Naive thymus-derived CD4-positive, alpha-beta T cell (primary cell): ENCODE measurements at regions of chr17 and their contacts with region 1.

Region 1: DNA sequence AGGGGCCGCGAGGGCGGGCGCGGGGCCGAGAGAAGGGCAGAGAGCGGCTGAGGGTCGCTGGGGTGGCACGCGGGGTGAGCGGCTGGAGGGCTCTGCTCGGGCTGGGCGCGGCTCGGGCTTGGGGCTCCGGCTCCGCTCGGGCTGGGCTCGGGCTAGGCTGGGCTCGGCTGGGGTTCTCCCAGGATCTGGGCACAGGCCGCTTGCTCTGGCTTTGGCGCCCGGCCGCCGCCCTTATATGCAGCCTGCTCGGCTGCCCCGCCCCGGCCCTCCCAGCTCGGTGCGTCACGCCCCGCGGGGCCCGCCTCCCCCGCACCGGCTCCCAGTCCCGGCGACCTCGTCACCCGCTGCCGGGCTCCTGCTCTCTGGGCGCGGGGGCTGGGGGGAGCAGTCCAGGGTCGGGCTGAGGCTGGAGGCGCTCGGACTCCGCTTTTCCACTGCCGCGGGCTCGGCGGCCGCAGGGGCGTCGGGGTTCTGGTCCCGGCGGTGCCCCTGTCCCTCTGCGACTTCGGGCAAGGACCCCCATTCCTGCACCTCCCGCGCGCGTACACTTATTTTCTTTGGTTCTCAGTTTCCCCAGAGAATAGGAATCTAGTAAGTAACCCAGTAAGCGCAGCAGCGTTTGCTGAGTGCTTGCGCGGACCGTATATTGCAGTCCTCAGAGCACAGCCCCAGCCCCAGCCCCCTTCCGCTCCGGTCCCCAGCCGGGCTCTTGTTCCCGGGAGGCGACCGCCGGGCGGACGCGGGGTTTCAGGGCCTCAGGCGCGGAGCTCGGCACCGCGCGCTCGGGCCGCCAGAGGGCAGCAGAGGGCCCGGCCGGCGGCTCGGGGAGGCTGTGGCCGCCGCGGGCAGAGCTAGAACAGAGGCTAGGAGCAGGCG is at the start of gene RASD1:
- DNase-seq: peak; percentile 61 to 89 (median 74)
- ATAC-seq: peak; percentile 90
- H3K4me3 ChIP-seq: peak within 1 kb of the TSS; percentile 61
- H3K4me3 Mint-ChIP-seq: peak within 1 kb of the TSS; percentile 77 to 91 (median 86)
- H3K27ac ChIP-seq: peak within 1 kb of the TSS; percentile 44
- H3K27ac Mint-ChIP-seq: peak within 1 kb of the TSS in 5 of 9 donors; percentile 29 to 86 (median 42)
- H3K4me1 ChIP-seq: peaks cover 3 to 11% of the 10 kb centered on the region in 2 donors
- H3K4me1 Mint-ChIP-seq: peaks cover 12 to 20% (median 14%) of the 10 kb centered on the region in 7 donors
- H3K27me3 ChIP-seq: no peaks in the 10 kb centered on the region
- H3K27me3 Mint-ChIP-seq: peaks cover 5 to 24% (median 6%) of the 10 kb centered on the region in 5 donors
- total RNA-seq, gene RASD1: 0.35 to 2.5 (median 1.0) TPM

Region 2: DNA sequence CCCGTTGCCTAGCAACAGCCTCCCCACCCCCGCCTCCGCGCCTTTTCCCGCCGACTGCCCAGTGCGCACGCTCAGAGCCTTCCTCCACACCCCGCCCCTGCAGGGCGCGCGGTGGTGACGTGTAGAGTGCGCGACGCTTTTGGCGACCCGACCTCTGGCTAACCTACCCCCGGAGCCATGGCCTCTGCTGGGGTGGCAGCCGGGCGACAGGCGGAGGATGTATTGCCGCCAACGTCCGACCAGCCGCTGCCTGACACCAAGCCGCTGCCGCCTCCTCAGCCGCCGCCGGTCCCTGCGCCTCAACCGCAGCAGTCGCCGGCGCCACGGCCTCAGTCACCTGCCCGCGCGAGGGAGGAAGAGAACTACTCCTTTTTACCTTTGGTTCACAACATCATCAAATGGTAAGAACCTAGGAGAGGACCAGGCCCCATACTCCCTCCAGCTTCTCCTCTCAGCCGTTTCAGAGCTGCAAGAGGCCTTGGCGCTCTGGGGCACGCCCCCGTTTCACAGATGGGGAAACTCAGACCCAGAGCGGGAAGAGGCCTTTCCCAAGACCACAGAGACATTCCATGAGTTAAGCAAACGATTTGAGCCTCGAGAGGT is 19.5 kb before region 1 on chr17 and contains the start of gene MED9:
- CTCF ChIA-PET with region 1: interaction called, 4 read pairs
- POLR2A ChIA-PET with region 1: interaction called, 3 read pairs
- intact Hi-C with region 1: loop called (anchors 1 kb)
- DNase-seq: peak; percentile 90 to 98 (median 94)
- ATAC-seq: peak; percentile 100
- H3K4me3 ChIP-seq: peak within 1 kb of the TSS; percentile 98
- H3K4me3 Mint-ChIP-seq: peak within 1 kb of the TSS; percentile 85 to 92 (median 92)
- H3K27ac ChIP-seq: peak within 1 kb of the TSS; percentile 87
- H3K27ac Mint-ChIP-seq: peak within 1 kb of the TSS; percentile 72 to 95 (median 92)
- H3K4me1 ChIP-seq: peaks cover 10 to 29% of the 10 kb centered on the region in 2 donors
- H3K4me1 Mint-ChIP-seq: peaks cover 20 to 58% (median 49%) of the 10 kb centered on the region in 7 donors
- H3K27me3 ChIP-seq: no peaks in the 10 kb centered on the region
- H3K27me3 Mint-ChIP-seq: peaks cover 0 to 11% (median 0%) of the 10 kb centered on the region in 5 donors
- total RNA-seq, gene MED9: 14.0 to 24.1 (median 17.2) TPM

Region 3: DNA sequence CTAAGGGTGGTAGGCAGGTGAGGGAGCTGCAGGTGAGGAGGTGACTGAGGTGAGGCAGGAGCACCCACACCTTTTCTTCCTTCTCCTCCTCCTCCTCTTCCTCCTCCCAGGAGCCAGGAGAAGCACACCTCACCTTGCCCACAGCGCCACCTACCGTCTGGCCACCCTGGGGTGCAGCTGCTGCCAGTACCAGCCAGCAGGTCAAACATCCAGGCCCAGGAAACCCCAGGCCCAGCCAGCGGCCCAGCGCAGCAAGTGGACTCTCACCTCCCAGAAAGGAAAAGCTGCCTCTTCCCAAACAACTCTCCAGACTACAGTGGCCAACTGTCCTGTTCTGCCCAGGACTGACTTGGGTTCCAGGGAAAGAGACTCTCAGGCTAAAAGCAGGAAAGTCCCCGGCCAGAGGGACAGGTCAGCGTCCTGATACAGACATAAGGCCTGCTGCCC is 72.3 kb after region 1 on chr17:
- CTCF ChIA-PET with region 1: interaction called, 3 read pairs
- POLR2A ChIA-PET with region 1: no interaction called
- intact Hi-C with region 1: loop called (anchors 5 to 10 kb)
- DNase-seq: peak in 7 of 9 donors; percentile 15 to 73 (median 29)
- ATAC-seq: no peak
- H3K4me3 ChIP-seq: no peak overlapping the region
- H3K4me3 Mint-ChIP-seq: no peak overlapping the region
- H3K27ac ChIP-seq: no peak overlapping the region
- H3K27ac Mint-ChIP-seq: peak overlapping the region in 1 of 9 donors; percentile 19
- H3K4me1 ChIP-seq: no peaks in the 10 kb centered on the region
- H3K4me1 Mint-ChIP-seq: peaks cover 0 to 7% (median 0%) of the 10 kb centered on the region in 7 donors
- H3K27me3 ChIP-seq: no peaks in the 10 kb centered on the region
- H3K27me3 Mint-ChIP-seq: no peaks in the 10 kb centered on the region

Region 4: DNA sequence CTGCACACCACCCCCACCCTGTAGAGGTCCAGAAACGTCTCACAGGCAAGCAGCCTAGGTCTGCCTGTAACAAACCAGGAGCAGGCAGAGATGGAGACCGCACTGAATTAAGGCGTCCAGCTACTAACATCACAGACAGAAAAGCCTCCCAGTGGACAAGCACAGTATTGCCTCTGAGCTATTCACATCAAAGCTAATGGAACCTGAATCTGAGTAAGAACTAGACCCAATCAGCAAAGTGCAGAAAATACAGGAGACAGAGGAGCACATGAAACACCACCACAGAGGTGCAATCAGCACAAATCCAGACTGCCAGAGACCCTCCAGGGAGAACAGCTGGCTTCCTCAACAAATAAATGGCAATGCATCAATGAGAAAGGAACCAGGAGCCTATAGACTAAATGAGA is 117.3 kb after region 1 on chr17:
- CTCF ChIA-PET with region 1: interaction called, 3 read pairs
- POLR2A ChIA-PET with region 1: no interaction called
- intact Hi-C with region 1: loop called in 1 of 2 experiments (anchors 1 kb)
- DNase-seq: peak in 8 of 9 donors; percentile 15 to 54 (median 42)
- ATAC-seq: peak; percentile 89
- H3K4me3 ChIP-seq: no peak overlapping the region
- H3K4me3 Mint-ChIP-seq: no peak overlapping the region
- H3K27ac ChIP-seq: no peak overlapping the region
- H3K27ac Mint-ChIP-seq: peak overlapping the region in 1 of 9 donors; percentile 82
- H3K4me1 ChIP-seq: no peaks in the 10 kb centered on the region
- H3K4me1 Mint-ChIP-seq: peaks cover 0 to 6% (median 2%) of the 10 kb centered on the region in 7 donors
- H3K27me3 ChIP-seq: no peaks in the 10 kb centered on the region
- H3K27me3 Mint-ChIP-seq: no peaks in the 10 kb centered on the region

Region 5: DNA sequence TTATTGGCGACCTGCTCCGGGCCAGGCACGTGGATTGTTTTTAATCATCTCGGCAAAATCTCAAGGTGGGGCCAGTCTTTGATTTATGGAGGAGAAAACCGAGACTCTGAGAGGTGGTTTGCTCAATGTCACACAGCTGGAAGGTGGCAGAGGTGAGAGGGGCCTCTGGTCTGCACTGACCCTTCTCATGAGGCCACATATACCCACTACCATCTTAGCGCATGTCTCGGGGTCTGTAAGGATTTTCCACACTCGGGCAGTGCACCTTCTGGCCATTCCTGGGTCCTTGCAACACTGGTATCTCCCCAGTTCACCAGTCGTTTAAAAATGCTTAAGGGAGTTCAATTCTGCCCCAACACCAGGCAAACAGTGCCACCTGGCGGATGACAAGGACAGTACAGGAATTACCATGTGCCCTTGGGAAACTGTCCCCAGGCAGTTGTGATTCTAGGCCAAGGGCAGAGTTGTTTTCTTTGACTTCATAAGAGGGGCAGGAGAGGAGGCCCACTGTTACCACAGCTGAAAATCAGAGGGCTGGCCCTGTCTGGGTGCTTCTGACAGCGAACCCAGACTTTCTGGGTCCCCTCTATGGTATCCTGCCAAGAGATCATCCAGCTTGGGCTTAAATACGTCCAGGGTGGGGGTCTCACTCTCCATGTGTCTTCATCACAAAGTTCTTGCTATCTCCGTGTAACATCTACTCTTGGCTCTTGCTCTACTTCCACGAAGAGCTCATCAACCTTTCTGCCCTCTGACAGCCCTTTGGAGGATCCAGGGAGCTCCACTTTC is 145.4 kb after region 1 on chr17:
- CTCF ChIA-PET with region 1: interaction called, 39 read pairs
- POLR2A ChIA-PET with region 1: no interaction called
- intact Hi-C with region 1: loop called (anchors 1 kb)
- DNase-seq: peak; percentile 49 to 84 (median 72)
- ATAC-seq: peak; percentile 91
- H3K4me3 ChIP-seq: no peak overlapping the region
- H3K4me3 Mint-ChIP-seq: no peak overlapping the region
- H3K27ac ChIP-seq: no peak overlapping the region
- H3K27ac Mint-ChIP-seq: peak overlapping the region in 1 of 9 donors; percentile 65
- H3K4me1 ChIP-seq: no peaks in the 10 kb centered on the region
- H3K4me1 Mint-ChIP-seq: peaks cover 0 to 5% (median 0%) of the 10 kb centered on the region in 7 donors
- H3K27me3 ChIP-seq: no peaks in the 10 kb centered on the region
- H3K27me3 Mint-ChIP-seq: peaks cover 0 to 2% (median 0%) of the 10 kb centered on the region in 5 donors

Region 6: GRCh38 chr17:17919169-17920107 is 423.0 kb after region 1 on chr17:
- CTCF ChIA-PET with region 1: no interaction called
- POLR2A ChIA-PET with region 1: no interaction called
- intact Hi-C with region 1: no loop called
- DNase-seq: peak; percentile 18 to 77 (median 67)
- ATAC-seq: peak; percentile 90
- H3K4me3 ChIP-seq: no peak overlapping the region
- H3K4me3 Mint-ChIP-seq: no peak overlapping the region
- H3K27ac ChIP-seq: no peak overlapping the region
- H3K27ac Mint-ChIP-seq: peak overlapping the region in 5 of 9 donors; percentile 17 to 49 (median 34)
- H3K4me1 ChIP-seq: peaks cover 0 to 6% of the 10 kb centered on the region in 2 donors
- H3K4me1 Mint-ChIP-seq: peaks cover 21 to 34% (median 26%) of the 10 kb centered on the region in 7 donors
- H3K27me3 ChIP-seq: no peaks in the 10 kb centered on the region
- H3K27me3 Mint-ChIP-seq: no peaks in the 10 kb centered on the region

Region 7: DNA sequence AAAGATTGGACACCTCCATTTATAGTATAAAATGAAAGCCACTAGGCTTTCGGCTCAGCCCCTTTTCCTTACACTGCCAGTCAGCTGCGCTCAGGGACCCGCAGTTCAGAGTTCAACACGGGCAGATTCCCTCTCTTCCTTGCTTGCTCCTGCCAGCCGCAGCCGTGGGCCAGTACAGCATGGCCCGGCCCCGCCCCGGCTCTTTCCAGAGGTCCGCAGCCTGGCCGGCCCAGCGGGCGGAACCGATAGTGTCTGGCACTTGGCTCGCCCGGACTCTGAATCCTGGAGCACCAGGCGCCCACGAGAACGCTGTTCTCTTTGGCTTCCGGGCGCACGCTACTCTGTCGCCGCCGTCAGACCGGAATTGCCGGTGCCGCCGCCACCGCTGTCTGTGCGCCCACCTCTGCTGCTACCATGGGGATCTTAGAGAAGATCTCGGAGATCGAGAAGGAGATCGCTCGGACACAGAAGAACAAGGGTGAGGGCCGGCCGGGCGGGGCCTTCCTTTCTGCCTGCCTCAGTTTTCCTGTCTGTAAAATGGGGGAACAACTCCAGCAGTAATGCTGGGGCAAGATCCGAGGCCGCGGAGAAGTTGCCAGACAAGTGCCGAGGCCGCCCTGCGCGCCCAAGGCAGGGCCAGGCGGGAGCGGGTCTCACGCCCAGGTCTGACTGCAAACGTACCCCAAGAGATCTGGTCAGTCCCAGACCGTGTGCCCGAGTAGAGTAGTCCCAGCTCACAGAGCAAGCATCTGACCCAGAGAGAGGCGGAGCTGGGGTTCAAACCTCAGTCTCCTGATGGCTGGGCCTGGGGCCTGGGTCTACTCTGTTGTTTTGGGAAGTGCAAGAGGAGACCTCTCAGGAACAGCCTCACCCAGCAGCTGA is 591.4 kb after region 1 on chr17 and contains the start of gene DRG2:
- CTCF ChIA-PET with region 1: no interaction called
- POLR2A ChIA-PET with region 1: no interaction called
- intact Hi-C with region 1: no loop called
- DNase-seq: peak; percentile 79 to 94 (median 85)
- ATAC-seq: peak; percentile 98
- H3K4me3 ChIP-seq: peak within 1 kb of the TSS; percentile 84
- H3K4me3 Mint-ChIP-seq: peak within 1 kb of the TSS; percentile 97 to 100 (median 98)
- H3K27ac ChIP-seq: peak within 1 kb of the TSS; percentile 85
- H3K27ac Mint-ChIP-seq: peak within 1 kb of the TSS; percentile 96 to 99 (median 98)
- H3K4me1 ChIP-seq: peaks cover 9 to 12% of the 10 kb centered on the region in 2 donors
- H3K4me1 Mint-ChIP-seq: peaks cover 19 to 35% (median 27%) of the 10 kb centered on the region in 7 donors
- H3K27me3 ChIP-seq: no peaks in the 10 kb centered on the region
- H3K27me3 Mint-ChIP-seq: no peaks in the 10 kb centered on the region
- total RNA-seq, gene DRG2: 39.6 to 54.7 (median 48.8) TPM